Activated B cell treated with CpG ODN at 0.5 μM for 24 hours (primary cell): ENCODE measurements at regions of chr17 and their contacts with region 1.

Region 1: DNA sequence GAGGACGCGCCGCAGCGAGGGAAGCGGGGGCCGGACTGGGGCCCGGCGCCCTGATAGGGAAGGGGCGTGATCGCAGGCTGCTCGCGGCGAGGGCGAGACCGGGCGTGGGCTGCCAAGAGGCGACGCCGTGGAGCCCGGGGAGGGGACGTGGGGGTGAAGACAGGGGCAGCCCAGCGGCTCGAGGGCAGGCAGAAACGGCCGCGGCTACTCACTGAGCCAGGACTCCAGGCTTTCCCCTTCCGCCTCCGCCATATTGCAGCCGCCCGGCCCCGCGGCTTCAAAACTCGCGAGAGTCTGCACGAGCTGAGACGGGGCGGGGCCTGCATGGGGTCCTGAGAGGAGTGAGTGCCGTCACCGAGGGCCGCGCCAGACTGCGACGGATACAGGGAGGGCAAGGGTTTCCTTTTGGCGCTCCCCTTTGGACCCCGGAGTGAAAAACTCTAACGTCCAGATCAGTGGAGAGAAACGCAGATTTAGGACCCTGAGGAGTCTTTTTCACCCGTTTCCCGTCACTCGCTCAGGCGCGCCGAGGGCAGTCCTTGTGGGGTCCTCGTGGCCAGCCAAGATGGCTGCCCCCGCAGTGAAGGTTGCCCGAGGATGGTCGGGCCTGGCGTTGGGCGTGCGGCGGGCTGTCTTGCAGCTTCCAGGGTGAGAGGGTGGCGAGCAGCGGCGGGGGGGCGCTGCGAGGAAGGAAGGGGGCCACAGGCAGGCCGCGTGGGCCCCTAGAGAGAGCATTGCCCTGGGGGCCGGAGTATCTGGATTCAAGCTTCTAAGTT is at the starts of genes GGA3 and MRPS7:
- DNase-seq: peak; percentile 93
- ATAC-seq: peak; percentile 97
- H3K4me3 Mint-ChIP-seq: peak within 1 kb of the TSS; percentile 99
- H3K27ac Mint-ChIP-seq: peak within 1 kb of the TSS; percentile 99
- H3K4me1 Mint-ChIP-seq: peaks cover 56% of the 10 kb centered on the region
- H3K27me3 Mint-ChIP-seq: no peaks in the 10 kb centered on the region
- CTCF ChIP-seq: no peak
- total RNA-seq, gene GGA3: 116 and 119 TPM in 2 replicates
- total RNA-seq, gene MRPS7: 67.6 and 71.3 TPM in 2 replicates

Region 2: DNA sequence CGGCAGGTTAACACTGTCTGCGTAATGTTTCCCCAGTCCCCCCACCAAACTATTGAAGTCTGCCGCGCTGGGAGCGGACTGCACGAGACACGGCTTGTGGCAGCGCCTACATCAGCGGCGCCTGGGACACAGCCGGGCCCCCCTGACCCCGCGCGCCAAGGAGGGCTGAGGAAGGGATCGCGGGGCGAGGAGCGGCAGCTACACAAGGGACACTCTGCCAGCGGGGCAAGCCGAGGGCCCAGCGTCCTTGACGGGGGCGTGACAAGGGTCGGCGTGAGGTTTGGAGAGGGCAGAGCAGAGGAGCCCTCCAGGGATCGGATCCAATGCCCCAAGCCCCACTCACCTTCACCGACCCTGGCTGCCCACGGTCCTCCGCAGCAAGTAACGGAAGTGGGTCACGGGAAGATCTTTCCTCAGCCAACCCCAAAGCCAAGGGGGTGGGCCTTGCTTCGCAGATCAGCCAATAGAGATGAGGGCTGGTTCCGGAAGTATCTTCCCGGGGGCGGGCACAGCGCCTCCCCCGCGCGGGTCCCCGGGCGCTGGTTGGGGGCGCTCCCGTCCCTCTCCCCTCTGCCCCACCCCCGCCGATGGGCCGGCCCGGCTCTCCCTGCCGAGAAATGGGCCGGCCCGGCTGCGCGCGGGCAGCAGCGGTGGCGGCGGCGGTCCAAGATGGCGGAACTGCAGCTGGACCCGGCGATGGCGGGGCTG is 214.8 kb before region 1 on chr17 and contains the starts of genes ATP5PD and KCTD2:
- CTCF ChIA-PET with region 1: no interaction called
- POLR2A ChIA-PET with region 1: no interaction called
- intact Hi-C with region 1: loop called (anchors 2 kb)
- DNase-seq: peak; percentile 91
- ATAC-seq: peak; percentile 95
- H3K4me3 Mint-ChIP-seq: peak within 1 kb of the TSS; percentile 97
- H3K27ac Mint-ChIP-seq: peak within 1 kb of the TSS; percentile 86
- H3K4me1 Mint-ChIP-seq: peaks cover 37% of the 10 kb centered on the region
- H3K27me3 Mint-ChIP-seq: no peaks in the 10 kb centered on the region
- CTCF ChIP-seq: no peak
- total RNA-seq, gene ATP5PD: 158 and 181 TPM in 2 replicates
- total RNA-seq, gene KCTD2: 19.5 and 20.2 TPM in 2 replicates

Region 3: GRCh38 chr17:75182569-75183450 is 78.7 kb before region 1 on chr17 and contains the start of gene SUMO2:
- CTCF ChIA-PET with region 1: no interaction called
- POLR2A ChIA-PET with region 1: interaction called, 10 read pairs
- intact Hi-C with region 1: loop called (anchors 2 kb)
- DNase-seq: peak; percentile 96
- ATAC-seq: peak; percentile 82
- H3K4me3 Mint-ChIP-seq: peak within 1 kb of the TSS; percentile 86
- H3K27ac Mint-ChIP-seq: peak within 1 kb of the TSS; percentile 97
- H3K4me1 Mint-ChIP-seq: peaks cover 38% of the 10 kb centered on the region
- H3K27me3 Mint-ChIP-seq: no peaks in the 10 kb centered on the region
- CTCF ChIP-seq: no peak
- total RNA-seq, gene SUMO2: 365 and 394 TPM in 2 replicates

Region 4: GRCh38 chr17:75228305-75228704 is 33.2 kb before region 1 on chr17:
- CTCF ChIA-PET with region 1: no interaction called
- POLR2A ChIA-PET with region 1: no interaction called
- intact Hi-C with region 1: no loop called
- DNase-seq: no peak
- ATAC-seq: no peak
- H3K4me3 Mint-ChIP-seq: no peak overlapping the region
- H3K27ac Mint-ChIP-seq: no peak overlapping the region
- H3K4me1 Mint-ChIP-seq: no peaks in the 10 kb centered on the region
- H3K27me3 Mint-ChIP-seq: no peaks in the 10 kb centered on the region
- CTCF ChIP-seq: no peak

Region 5: DNA sequence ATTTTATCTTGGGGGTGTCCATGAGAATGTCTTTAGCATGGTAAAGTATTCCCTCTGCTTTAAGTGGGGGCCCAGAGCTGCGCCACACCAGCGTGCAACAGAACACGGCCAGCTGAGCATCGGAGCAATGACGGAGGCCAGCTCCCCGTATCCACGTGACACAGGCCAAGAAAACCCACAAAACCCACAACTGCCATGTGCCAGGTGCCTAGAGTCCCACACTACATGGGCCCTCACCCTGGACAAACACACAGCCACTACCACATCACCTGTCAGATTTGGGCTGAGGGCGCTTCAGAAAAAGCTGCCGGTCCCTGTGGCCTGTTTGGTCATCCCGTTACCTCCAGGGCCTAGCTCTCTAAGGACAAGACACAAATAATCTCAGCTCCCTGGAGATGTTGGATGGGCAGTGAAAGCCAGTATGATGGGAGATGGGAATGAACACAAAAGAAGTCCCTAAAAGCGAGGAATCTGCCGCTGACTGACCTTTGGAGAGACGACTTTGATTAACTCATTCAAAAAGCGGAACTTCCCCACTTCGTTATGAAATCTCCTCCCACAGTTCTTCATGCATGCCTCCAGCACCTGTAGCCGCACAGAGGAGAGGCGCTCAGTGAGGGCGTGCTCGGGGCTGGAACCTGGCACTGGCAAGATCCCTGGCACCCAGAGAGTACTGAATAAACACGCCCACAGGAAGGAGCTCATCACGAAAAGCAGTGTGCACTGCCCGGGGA is 17.2 kb before region 1 on chr17:
- CTCF ChIA-PET with region 1: interaction called, 10 read pairs
- POLR2A ChIA-PET with region 1: interaction called, 54 read pairs
- intact Hi-C with region 1: loop called (anchors 1 kb)
- DNase-seq: peak; percentile 31
- ATAC-seq: peak; percentile 75
- H3K4me3 Mint-ChIP-seq: peak overlapping the region; percentile 57
- H3K27ac Mint-ChIP-seq: peak overlapping the region; percentile 87
- H3K4me1 Mint-ChIP-seq: peaks cover 55% of the 10 kb centered on the region
- H3K27me3 Mint-ChIP-seq: no peaks in the 10 kb centered on the region
- CTCF ChIP-seq: no peak

Region 6: GRCh38 chr17:75295201-75296158 is 34.0 kb after region 1 on chr17:
- CTCF ChIA-PET with region 1: no interaction called
- POLR2A ChIA-PET with region 1: interaction called, 54 read pairs
- intact Hi-C with region 1: loop called (anchors 1 kb)
- DNase-seq: peak; percentile 46
- ATAC-seq: peak; percentile 64
- H3K4me3 Mint-ChIP-seq: peak overlapping the region; percentile 76
- H3K27ac Mint-ChIP-seq: peak overlapping the region; percentile 100
- H3K4me1 Mint-ChIP-seq: peaks cover 77% of the 10 kb centered on the region
- H3K27me3 Mint-ChIP-seq: no peaks in the 10 kb centered on the region
- CTCF ChIP-seq: no peak

Region 7: DNA sequence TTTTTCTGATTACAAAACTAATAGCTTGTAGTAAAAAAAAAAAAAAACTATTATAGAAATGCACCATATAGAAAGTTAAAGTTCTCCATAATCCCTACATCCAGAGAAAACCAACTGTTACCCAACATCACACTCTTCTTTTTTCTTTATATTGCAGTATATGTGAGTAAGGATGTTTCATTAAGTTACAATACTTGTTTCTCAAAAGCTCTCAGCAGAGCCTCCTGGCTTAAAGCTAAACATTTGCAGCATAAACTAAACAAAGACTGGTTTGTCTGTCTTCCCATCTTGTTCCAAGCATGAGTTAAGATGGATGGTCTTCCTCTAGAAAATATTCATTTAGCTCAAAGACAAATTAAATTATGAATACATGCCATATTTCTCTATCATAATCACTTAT is 118.8 kb after region 1 on chr17:
- CTCF ChIA-PET with region 1: no interaction called
- POLR2A ChIA-PET with region 1: interaction called, 13 read pairs
- intact Hi-C with region 1: no loop called
- DNase-seq: no peak
- ATAC-seq: no peak
- H3K4me3 Mint-ChIP-seq: no peak overlapping the region
- H3K27ac Mint-ChIP-seq: no peak overlapping the region
- H3K4me1 Mint-ChIP-seq: peaks cover 84% of the 10 kb centered on the region
- H3K27me3 Mint-ChIP-seq: no peaks in the 10 kb centered on the region
- CTCF ChIP-seq: no peak

Region 8: GRCh38 chr17:75625813-75626486 is 364.4 kb after region 1 on chr17:
- CTCF ChIA-PET with region 1: no interaction called
- POLR2A ChIA-PET with region 1: no interaction called
- intact Hi-C with region 1: no loop called
- DNase-seq: no peak
- ATAC-seq: peak; percentile 79
- H3K4me3 Mint-ChIP-seq: no peak overlapping the region
- H3K27ac Mint-ChIP-seq: no peak overlapping the region
- H3K4me1 Mint-ChIP-seq: no peaks in the 10 kb centered on the region
- H3K27me3 Mint-ChIP-seq: no peaks in the 10 kb centered on the region
- CTCF ChIP-seq: no peak